CD8-positive, alpha-beta memory T cell (primary cell): ENCODE measurements at regions of chr6 and their contacts with region 1.

Region 1: DNA sequence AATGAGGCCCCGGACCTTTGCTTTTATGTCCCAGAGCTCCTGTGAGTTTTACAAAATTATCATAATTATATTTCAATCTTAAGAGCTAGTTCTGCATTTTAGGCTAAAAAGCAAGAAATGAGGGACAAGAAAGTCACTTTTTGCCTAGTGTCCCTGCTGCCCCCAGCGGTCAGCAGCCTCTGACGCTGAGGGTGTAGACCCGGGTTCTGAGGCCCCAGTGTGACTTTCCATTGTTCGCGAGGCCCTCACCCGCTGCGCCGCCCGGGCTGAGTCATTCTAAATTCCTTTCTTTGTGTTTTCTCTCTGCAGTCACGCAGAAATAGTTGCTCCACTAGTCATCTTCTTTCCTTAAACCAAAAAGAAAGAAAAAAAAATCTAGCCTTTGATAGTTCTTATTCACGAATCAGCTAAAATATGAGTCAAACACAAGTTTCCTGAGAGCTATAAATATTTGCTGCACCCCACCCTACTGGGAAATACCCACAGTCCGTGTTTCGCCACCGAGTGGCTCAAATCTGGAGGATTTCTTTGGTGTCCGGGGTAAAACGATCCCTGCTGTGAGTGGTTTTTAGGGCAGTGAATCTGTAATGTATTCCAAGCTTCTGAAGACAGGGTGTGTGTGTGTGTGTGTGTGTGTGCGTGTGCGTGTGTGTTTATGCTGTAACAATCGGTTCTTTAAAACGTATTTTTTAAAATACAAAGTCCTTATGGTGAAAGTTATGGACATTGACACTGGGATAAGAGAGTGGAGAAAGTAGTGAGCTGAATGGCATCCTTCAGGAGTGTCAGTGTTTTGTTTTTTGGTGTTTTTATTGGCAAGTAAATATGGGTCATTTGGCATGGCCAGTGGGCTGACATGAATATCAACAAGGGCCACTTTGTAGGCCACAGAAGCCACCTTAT is 59.7 kb upstream of the EEF1A1 start:
- DNase-seq: peak; percentile 17 to 72 (median 36)
- H3K4me3 ChIP-seq: peak overlapping the region; percentile 33
- H3K4me3 Mint-ChIP-seq: peak overlapping the region; percentile 47 to 88 (median 80)
- H3K27ac ChIP-seq: peak overlapping the region; percentile 66
- H3K27ac Mint-ChIP-seq: peak overlapping the region; percentile 89 to 99 (median 95)
- H3K4me1 ChIP-seq: peaks cover 23% of the 10 kb centered on the region
- H3K4me1 Mint-ChIP-seq: peaks cover 18 to 32% (median 20%) of the 10 kb centered on the region in 3 donors
- H3K27me3 ChIP-seq: no peaks in the 10 kb centered on the region
- H3K27me3 Mint-ChIP-seq: no peaks in the 10 kb centered on the region

Region 2: DNA sequence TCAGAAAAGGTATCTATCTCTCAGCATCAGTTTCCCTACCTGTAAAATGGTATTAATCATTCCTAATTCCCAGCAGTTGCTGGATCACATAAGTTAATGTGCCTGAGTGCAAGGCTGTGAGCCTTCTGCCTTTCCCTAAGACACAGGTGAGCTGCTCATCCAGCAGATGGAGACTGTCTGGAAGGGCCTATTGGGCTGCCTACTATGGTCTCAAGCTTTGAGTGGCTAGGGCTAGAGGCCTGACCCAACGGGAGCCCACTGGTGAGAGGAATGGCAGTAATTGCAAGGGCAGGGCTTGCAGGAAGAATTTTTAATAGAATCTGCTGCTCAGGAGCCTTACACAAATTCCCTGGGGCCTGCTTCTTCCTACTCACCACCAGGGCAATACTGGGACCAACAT is 321.8 kb before region 1 on chr6:
- CTCF ChIA-PET with region 1: no interaction called
- POLR2A ChIA-PET with region 1: no interaction called
- DNase-seq: no peak
- H3K4me3 ChIP-seq: no peak overlapping the region
- H3K4me3 Mint-ChIP-seq: no peak overlapping the region
- H3K27ac ChIP-seq: no peak overlapping the region
- H3K27ac Mint-ChIP-seq: no peak overlapping the region
- H3K4me1 ChIP-seq: peaks cover 5% of the 10 kb centered on the region
- H3K4me1 Mint-ChIP-seq: peaks cover 9 to 13% (median 10%) of the 10 kb centered on the region in 3 donors
- H3K27me3 ChIP-seq: no peaks in the 10 kb centered on the region
- H3K27me3 Mint-ChIP-seq: no peaks in the 10 kb centered on the region

Region 3: GRCh38 chr6:73388800-73389512 is 191.5 kb before region 1 on chr6:
- CTCF ChIA-PET with region 1: no interaction called
- POLR2A ChIA-PET with region 1: interaction called, 12 read pairs
- DNase-seq: peak; percentile 21 to 67 (median 45)
- H3K4me3 ChIP-seq: peak overlapping the region; percentile 66
- H3K4me3 Mint-ChIP-seq: peak overlapping the region; percentile 78 to 95 (median 86)
- H3K27ac ChIP-seq: peak overlapping the region; percentile 69
- H3K27ac Mint-ChIP-seq: peak overlapping the region; percentile 78 to 95 (median 86)
- H3K4me1 ChIP-seq: peaks cover 8% of the 10 kb centered on the region
- H3K4me1 Mint-ChIP-seq: peaks cover 27 to 36% (median 35%) of the 10 kb centered on the region in 3 donors
- H3K27me3 ChIP-seq: no peaks in the 10 kb centered on the region
- H3K27me3 Mint-ChIP-seq: no peaks in the 10 kb centered on the region

Region 4: GRCh38 chr6:73631849-73632248 is 51.4 kb after region 1 on chr6:
- CTCF ChIA-PET with region 1: no interaction called
- POLR2A ChIA-PET with region 1: no interaction called
- DNase-seq: no peak
- H3K4me3 ChIP-seq: no peak overlapping the region
- H3K4me3 Mint-ChIP-seq: no peak overlapping the region
- H3K27ac ChIP-seq: no peak overlapping the region
- H3K27ac Mint-ChIP-seq: peak overlapping the region in 4 of 8 donors; percentile 6 to 73 (median 56)
- H3K4me1 ChIP-seq: no peaks in the 10 kb centered on the region
- H3K4me1 Mint-ChIP-seq: no peaks in the 10 kb centered on the region
- H3K27me3 ChIP-seq: no peaks in the 10 kb centered on the region
- H3K27me3 Mint-ChIP-seq: no peaks in the 10 kb centered on the region